Activated T-helper 1 cell treated with anti-CD3 and anti-CD28 coated beads, Interleukin-12 subunit alpha, Interleukin-12 subunit beta, Interleukin-2, Interleukin-4 antibody, amounts not matched to agents 30 ng/mL and 10 ng/mL and 1 ng/mL, durations not matched to agents 14 hours and 24 hours and 36 hours (primary cell): ENCODE measurements at regions of chr10 and their contacts with region 1.

Region 1: GRCh38 chr10:63173468-63174232 is 40.5 kb downstream of the NRBF2 start:
- DNase-seq: no peak
- H3K4me3 Mint-ChIP-seq: peak overlapping the region; percentile 61
- H3K27ac Mint-ChIP-seq: peak overlapping the region; percentile 86
- H3K4me1 Mint-ChIP-seq: peaks cover 78% of the 10 kb centered on the region
- H3K27me3 Mint-ChIP-seq: no peaks in the 10 kb centered on the region

Region 2: GRCh38 chr10:61992671-61993668 is 1180.7 kb before region 1 on chr10:
- intact Hi-C with region 1: loop called (anchors 10 kb)
- DNase-seq: peak; percentile 69
- H3K4me3 Mint-ChIP-seq: peak overlapping the region; percentile 76
- H3K27ac Mint-ChIP-seq: peak overlapping the region; percentile 90
- H3K4me1 Mint-ChIP-seq: peaks cover 86% of the 10 kb centered on the region
- H3K27me3 Mint-ChIP-seq: no peaks in the 10 kb centered on the region

Region 3: DNA sequence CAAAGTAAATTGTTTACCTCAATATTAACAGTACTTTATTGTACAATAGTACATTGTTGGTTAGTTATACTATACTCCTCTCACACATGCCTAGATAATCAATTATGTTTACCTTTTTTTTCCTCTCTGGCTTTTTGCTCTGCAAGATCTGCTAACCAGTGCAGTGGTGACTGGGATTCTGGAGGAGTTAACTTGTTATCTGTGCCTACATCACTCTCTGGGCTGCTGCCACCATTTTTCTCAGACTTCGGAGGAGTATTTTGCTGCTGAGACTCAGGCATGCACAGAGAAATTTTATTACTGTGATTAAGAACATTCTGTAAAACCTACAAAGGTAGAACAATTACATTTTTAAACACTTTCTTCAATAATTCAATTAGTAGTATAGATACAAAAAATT is 19.2 kb after region 1 on chr10:
- intact Hi-C with region 1: loop called (anchors 2 kb)
- DNase-seq: no peak
- H3K4me3 Mint-ChIP-seq: no peak overlapping the region
- H3K27ac Mint-ChIP-seq: peak overlapping the region; percentile 35
- H3K4me1 Mint-ChIP-seq: peaks cover 8% of the 10 kb centered on the region
- H3K27me3 Mint-ChIP-seq: no peaks in the 10 kb centered on the region

Region 4: GRCh38 chr10:63227207-63227915 is 53.7 kb after region 1 on chr10:
- intact Hi-C with region 1: loop called (anchors 5 kb)
- DNase-seq: no peak
- H3K4me3 Mint-ChIP-seq: peak overlapping the region; percentile 61
- H3K27ac Mint-ChIP-seq: peak overlapping the region; percentile 79
- H3K4me1 Mint-ChIP-seq: peaks cover 34% of the 10 kb centered on the region
- H3K27me3 Mint-ChIP-seq: no peaks in the 10 kb centered on the region

Region 5: GRCh38 chr10:63465293-63466143 is 291.9 kb after region 1 on chr10 and contains the start of gene JMJD1C:
- intact Hi-C with region 1: loop called (anchors 5 kb)
- DNase-seq: peak; percentile 47
- H3K4me3 Mint-ChIP-seq: peak within 1 kb of the TSS; percentile 90
- H3K27ac Mint-ChIP-seq: peak within 1 kb of the TSS; percentile 68
- H3K4me1 Mint-ChIP-seq: peaks cover 21% of the 10 kb centered on the region
- H3K27me3 Mint-ChIP-seq: peaks cover 28% of the 10 kb centered on the region
- total RNA-seq, gene JMJD1C: 47.3 and 48.0 TPM in 2 replicates